Activated CD4-positive, alpha-beta memory T cell treated with anti-CD3 and anti-CD28 coated beads for 36 hours (primary cell): ENCODE measurements at regions of chr7 and their contacts with region 1.

Region 1: GRCh38 chr7:40134428-40135316 is at the starts of genes MPLKIP and SUGCT:
- DNase-seq: peak; percentile 88
- H3K4me3 Mint-ChIP-seq: peak within 1 kb of the TSS; percentile 92
- H3K27ac Mint-ChIP-seq: peak within 1 kb of the TSS; percentile 97
- H3K4me1 Mint-ChIP-seq: peaks cover 22% of the 10 kb centered on the region
- H3K27me3 Mint-ChIP-seq: peaks cover 6% of the 10 kb centered on the region
- total RNA-seq, gene MPLKIP: 34.6 to 34.7 TPM
- total RNA-seq, gene SUGCT: 0.76 to 1.5 TPM

Region 2: DNA sequence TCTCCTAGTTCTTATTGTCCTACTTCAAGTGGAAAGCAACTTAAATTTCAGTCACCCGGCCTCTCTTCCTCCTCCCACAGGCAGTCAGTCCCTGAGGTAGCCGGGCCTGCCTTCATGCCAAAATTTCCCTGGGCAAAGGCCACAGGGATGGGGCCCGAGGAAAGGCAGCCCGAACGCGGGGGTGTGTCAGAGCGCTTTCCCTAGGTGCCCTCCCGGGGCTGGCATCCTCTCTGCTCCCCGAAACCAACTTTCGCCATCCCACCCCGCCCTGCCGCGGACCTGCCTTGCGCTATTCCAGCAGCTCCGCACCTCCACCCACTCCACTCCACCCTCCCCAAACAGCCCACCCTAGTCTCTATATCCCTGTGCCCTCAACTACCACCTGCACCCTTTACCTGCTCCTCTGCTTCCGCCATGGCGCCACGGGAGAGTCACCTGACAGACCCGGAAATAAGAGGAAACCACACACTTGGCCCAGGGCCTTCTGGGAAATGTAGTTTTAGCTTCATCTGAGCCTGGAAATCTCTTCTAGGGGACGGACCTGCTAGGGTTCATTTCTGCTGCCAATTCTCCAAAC is 1225.8 kb before region 1 on chr7 and contains the start of gene VPS41:
- CTCF ChIA-PET with region 1: no interaction called
- POLR2A ChIA-PET with region 1: interaction called, 4 read pairs
- intact Hi-C with region 1: loop called (anchors 5 kb)
- DNase-seq: peak; percentile 86
- H3K4me3 Mint-ChIP-seq: peak within 1 kb of the TSS; percentile 91
- H3K27ac Mint-ChIP-seq: peak within 1 kb of the TSS; percentile 68
- H3K4me1 Mint-ChIP-seq: peaks cover 37% of the 10 kb centered on the region
- H3K27me3 Mint-ChIP-seq: no peaks in the 10 kb centered on the region
- total RNA-seq, gene VPS41: 62.9 to 66.8 TPM

Region 3: GRCh38 chr7:39566023-39566921 is 568.4 kb before region 1 on chr7 and contains the start of gene YAE1:
- CTCF ChIA-PET with region 1: no interaction called
- POLR2A ChIA-PET with region 1: no interaction called
- intact Hi-C with region 1: loop called (anchors 5 kb)
- DNase-seq: peak; percentile 88
- H3K4me3 Mint-ChIP-seq: peak within 1 kb of the TSS; percentile 98
- H3K27ac Mint-ChIP-seq: peak within 1 kb of the TSS; percentile 92
- H3K4me1 Mint-ChIP-seq: peaks cover 17% of the 10 kb centered on the region
- H3K27me3 Mint-ChIP-seq: no peaks in the 10 kb centered on the region
- total RNA-seq, gene YAE1: 7.3 to 8.8 TPM

Region 4: GRCh38 chr7:39623018-39623731 is 511.5 kb before region 1 on chr7 and contains the start of gene RALA:
- CTCF ChIA-PET with region 1: interaction called, 4 read pairs
- POLR2A ChIA-PET with region 1: interaction called, 3 read pairs
- intact Hi-C with region 1: loop called (anchors 5 kb)
- DNase-seq: peak; percentile 94
- H3K4me3 Mint-ChIP-seq: peak within 1 kb of the TSS; percentile 90
- H3K27ac Mint-ChIP-seq: peak within 1 kb of the TSS; percentile 87
- H3K4me1 Mint-ChIP-seq: peaks cover 45% of the 10 kb centered on the region
- H3K27me3 Mint-ChIP-seq: no peaks in the 10 kb centered on the region
- total RNA-seq, gene RALA: 27.1 to 31.4 TPM

Region 5: DNA sequence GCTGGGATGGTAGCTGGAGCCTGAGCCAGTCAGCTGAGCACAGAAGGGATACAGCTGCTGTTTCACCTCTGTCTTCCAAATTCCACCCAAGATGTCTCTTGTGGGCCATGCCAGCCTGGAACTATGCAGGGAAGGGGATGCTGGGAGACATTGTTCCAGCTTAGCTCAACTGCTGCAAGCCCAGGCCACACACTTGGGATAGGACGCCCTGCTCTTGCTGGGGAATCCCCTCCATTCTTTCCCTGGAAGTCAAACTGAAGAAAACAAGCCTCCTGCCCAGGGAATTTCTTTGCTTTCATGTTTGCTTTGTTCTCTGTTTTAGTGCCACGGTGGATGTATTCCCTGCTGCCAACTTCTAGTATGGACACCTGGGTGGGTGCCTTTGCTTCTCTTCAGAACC is 239.8 kb before region 1 on chr7:
- CTCF ChIA-PET with region 1: interaction called, 17 read pairs
- POLR2A ChIA-PET with region 1: no interaction called
- intact Hi-C with region 1: loop called (anchors 1 kb)
- DNase-seq: no peak
- H3K4me3 Mint-ChIP-seq: no peak overlapping the region
- H3K27ac Mint-ChIP-seq: no peak overlapping the region
- H3K4me1 Mint-ChIP-seq: no peaks in the 10 kb centered on the region
- H3K27me3 Mint-ChIP-seq: peaks cover 2% of the 10 kb centered on the region

Region 6: DNA sequence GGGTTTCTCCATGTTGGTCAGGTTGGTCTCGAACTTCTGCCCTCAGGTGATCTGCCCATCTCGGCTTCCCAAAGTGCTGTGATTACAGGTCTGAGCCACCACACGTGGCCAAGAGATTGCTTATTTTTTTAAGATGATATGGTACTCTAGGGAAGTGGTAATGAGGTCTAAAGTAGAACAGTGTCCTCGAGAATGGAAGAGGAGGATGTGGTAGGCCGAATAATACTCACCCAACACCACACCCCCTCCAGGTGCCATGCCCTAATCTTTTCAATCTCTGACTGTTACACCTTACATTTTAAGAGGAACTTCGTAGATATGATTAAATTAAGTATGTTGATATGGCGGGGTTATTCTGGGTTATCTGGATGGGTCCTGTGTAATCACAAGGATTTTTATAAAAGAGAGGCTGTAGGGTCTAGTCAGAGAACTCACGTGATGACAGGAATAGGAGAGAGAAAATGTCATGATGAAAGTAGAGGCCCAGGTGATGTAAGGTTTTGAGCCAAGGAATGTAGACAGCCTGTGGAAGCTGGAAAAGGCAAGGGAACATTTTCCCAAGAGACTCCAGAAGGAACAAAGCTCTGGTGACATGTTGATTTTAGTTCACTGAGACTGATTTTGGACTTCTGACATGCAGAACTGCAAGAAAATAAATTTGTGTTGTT is 155.1 kb before region 1 on chr7:
- CTCF ChIA-PET with region 1: no interaction called
- POLR2A ChIA-PET with region 1: no interaction called
- intact Hi-C with region 1: loop called (anchors 1 kb)
- DNase-seq: peak; percentile 41
- H3K4me3 Mint-ChIP-seq: no peak overlapping the region
- H3K27ac Mint-ChIP-seq: no peak overlapping the region
- H3K4me1 Mint-ChIP-seq: peaks cover 15% of the 10 kb centered on the region
- H3K27me3 Mint-ChIP-seq: no peaks in the 10 kb centered on the region

Region 7: GRCh38 chr7:40211276-40212003 is 76.8 kb after region 1 on chr7:
- CTCF ChIA-PET with region 1: no interaction called
- POLR2A ChIA-PET with region 1: no interaction called
- intact Hi-C with region 1: no loop called
- DNase-seq: no peak
- H3K4me3 Mint-ChIP-seq: no peak overlapping the region
- H3K27ac Mint-ChIP-seq: no peak overlapping the region
- H3K4me1 Mint-ChIP-seq: no peaks in the 10 kb centered on the region
- H3K27me3 Mint-ChIP-seq: no peaks in the 10 kb centered on the region